ENCODE measurements at regions of chr3 and their contacts with region 1.

Region 1: DNA sequence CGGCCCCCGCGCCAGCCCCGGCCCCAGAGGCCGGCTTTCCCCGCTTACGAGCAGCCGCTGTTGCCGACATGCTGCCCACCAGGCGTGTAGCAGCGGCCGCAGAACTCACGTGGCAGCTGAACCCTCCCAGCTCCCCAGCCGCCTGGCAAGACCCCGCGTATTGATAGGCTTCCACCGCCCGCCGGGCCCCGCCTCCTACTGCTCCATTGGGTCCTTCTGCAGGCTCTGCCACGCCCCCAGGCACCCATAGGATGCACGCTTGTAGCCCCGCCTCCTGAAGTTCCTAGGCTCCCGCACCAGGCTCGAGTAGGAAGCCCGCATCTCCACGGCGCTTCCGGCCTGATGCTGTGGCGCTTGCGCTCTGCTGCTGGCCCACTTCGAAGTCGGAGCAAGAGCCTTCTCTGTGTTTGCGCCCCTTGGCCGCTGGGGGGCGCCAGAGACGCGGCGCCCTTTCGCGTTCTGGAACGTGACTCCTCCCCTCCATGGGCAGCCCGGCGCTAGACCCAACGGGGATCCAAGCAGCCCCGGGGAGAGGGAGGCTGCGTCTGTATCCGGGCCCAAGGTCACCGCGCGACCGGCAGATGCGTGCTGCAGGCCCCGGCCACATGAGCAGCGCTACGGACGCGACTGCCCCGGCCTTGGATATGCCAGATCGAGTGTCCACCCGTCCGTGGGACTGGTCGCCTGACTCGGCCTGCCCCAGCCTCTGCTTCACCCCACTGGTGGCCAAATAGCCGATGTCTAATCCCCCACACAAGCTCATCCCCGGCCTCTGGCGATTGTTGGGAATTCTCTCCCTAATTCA is at the starts of genes PARP3 and RRP9:
- DNase-seq: peak; percentile 100
- H3K4me3 ChIP-seq: peak within 1 kb of the TSS; percentile 90
- H3K27ac ChIP-seq: no peak within 1 kb of the TSS
- H3K4me1 ChIP-seq: peaks cover 24% of the 10 kb centered on the region
- CTCF ChIP-seq: peak; percentile 96
- total RNA-seq, gene PARP3: 8.1 and 11.9 TPM in 2 replicates
- total RNA-seq, gene RRP9: 36.9 and 41.1 TPM in 2 replicates

Region 2: DNA sequence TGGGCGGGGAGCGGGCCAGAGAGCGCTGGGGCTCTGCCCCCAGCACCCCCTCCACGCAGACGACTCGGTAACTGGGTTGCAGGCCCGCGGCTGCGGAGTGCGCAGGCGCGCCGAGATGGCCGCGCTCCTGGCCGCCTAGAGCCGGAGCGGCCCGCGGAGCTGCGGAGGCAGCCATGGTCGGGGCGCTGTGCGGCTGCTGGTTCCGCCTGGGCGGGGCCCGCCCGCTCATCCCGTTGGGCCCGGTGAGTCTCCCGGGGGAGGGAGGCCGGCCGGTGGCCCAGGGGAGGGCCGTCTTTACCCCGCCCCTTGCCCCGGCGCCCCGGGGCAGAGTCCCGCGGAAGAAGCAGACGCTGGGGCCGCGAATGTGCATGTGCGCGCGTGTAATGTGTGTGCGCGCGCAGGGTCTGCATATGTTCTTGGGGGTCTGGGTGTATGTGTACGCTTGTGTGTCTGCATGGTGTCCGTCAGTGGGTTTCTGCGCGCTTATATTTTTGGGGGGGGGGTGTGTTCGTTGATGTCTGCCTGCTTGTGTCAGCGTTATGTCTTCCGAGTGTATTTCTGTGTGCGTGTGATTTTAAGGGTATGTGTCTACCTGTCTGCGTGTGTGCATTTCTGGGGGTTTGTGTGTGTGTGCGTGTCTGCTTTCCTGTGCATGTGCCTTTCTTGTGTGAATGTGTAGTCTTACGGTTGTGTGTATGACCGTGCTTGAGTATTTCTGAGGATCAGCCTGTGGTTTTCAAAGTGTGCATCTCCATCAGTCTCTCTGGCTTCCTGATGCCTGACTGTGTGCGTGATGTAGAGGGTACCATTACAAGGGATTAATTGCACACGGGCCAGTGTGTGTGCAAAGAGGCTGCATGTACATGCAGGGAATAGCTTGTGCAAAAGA is 33.2 kb after region 1 on chr3 and contains the start of gene ABHD14A:
- CTCF ChIA-PET with region 1: interaction called, 3 read pairs
- POLR2A ChIA-PET with region 1: interaction called, 3 read pairs
- intact Hi-C with region 1: loop called (anchors 1 kb)
- DNase-seq: peak; percentile 72
- H3K4me3 ChIP-seq: peak within 1 kb of the TSS; percentile 76
- H3K27ac ChIP-seq: peak within 1 kb of the TSS; percentile 30
- H3K4me1 ChIP-seq: peaks cover 30% of the 10 kb centered on the region
- CTCF ChIP-seq: no peak
- total RNA-seq, gene ABHD14A: 3.7 and 7.5 TPM in 2 replicates

Region 3: DNA sequence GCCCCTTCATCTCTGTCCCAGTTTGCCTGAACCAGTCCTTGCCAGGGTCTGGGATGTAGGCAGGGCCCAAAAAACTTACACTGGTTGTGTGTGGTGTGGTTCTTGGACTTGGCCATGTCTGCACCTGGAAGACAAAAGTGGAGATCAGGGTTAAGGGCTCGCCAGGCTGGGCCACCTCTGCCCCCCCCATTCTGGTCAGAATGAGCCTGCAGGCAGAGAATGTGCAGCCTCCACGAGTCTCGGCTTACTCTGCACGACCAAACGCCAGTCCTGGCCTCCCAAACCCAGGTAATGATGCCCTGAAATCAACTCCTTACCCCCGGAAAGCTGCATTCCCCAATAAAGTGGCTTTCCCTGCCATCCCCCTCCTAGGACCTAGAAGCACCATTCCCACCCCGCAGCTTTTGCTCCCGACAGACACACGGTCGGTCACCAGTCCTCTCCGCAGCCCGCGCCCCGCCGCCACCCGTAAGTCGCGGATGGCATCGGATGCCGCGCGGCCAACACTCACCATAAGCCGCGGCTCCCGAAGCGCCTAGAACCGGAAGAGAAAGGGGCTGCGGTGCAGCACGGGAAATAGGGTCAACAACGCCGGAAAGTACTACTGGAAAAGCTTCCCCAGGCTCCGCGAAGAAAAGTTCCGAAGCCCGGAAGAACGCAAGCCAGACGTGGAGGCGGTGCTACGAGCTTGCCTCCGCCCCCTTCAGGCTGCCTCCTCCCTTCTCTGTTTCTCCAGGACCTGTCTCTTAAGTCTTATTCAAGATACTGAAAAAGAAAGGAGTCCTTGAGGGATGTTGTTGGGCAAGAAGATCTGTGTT is 53.6 kb after region 1 on chr3 and contains the start of gene RPL29:
- CTCF ChIA-PET with region 1: no interaction called
- POLR2A ChIA-PET with region 1: interaction called, 11 read pairs
- intact Hi-C with region 1: loop called (anchors 1 kb)
- DNase-seq: peak; percentile 96
- H3K4me3 ChIP-seq: peak within 1 kb of the TSS; percentile 96
- H3K27ac ChIP-seq: peak within 1 kb of the TSS; percentile 60
- H3K4me1 ChIP-seq: peaks cover 29% of the 10 kb centered on the region
- CTCF ChIP-seq: no peak
- total RNA-seq, gene RPL29: 1,739 and 1,781 TPM in 2 replicates

Region 4: GRCh38 chr3:52056968-52057805 is 115.2 kb after region 1 on chr3:
- CTCF ChIA-PET with region 1: no interaction called
- POLR2A ChIA-PET with region 1: no interaction called
- intact Hi-C with region 1: loop called (anchors 2 kb)
- DNase-seq: peak; percentile 99
- H3K4me3 ChIP-seq: peak overlapping the region; percentile 82
- H3K27ac ChIP-seq: peak overlapping the region; percentile 42
- H3K4me1 ChIP-seq: peaks cover 41% of the 10 kb centered on the region
- CTCF ChIP-seq: no peak

Region 5: GRCh38 chr3:52123106-52123725 is 181.2 kb after region 1 on chr3:
- CTCF ChIA-PET with region 1: no interaction called
- POLR2A ChIA-PET with region 1: no interaction called
- intact Hi-C with region 1: loop called (anchors 5 kb)
- DNase-seq: peak; percentile 63
- H3K4me3 ChIP-seq: no peak overlapping the region
- H3K27ac ChIP-seq: no peak overlapping the region
- H3K4me1 ChIP-seq: peaks cover 22% of the 10 kb centered on the region
- CTCF ChIP-seq: peak; percentile 93

Region 6: GRCh38 chr3:52144034-52144795 is 202.2 kb after region 1 on chr3:
- CTCF ChIA-PET with region 1: no interaction called
- POLR2A ChIA-PET with region 1: no interaction called
- intact Hi-C with region 1: loop called (anchors 2 kb)
- DNase-seq: peak; percentile 81
- H3K4me3 ChIP-seq: no peak overlapping the region
- H3K27ac ChIP-seq: no peak overlapping the region
- H3K4me1 ChIP-seq: no peaks in the 10 kb centered on the region
- CTCF ChIP-seq: peak; percentile 94

Measured in OCI-LY7 (cell line).